ENCODE measurements at regions of chr16 and their contacts with region 1.

Region 1: DNA sequence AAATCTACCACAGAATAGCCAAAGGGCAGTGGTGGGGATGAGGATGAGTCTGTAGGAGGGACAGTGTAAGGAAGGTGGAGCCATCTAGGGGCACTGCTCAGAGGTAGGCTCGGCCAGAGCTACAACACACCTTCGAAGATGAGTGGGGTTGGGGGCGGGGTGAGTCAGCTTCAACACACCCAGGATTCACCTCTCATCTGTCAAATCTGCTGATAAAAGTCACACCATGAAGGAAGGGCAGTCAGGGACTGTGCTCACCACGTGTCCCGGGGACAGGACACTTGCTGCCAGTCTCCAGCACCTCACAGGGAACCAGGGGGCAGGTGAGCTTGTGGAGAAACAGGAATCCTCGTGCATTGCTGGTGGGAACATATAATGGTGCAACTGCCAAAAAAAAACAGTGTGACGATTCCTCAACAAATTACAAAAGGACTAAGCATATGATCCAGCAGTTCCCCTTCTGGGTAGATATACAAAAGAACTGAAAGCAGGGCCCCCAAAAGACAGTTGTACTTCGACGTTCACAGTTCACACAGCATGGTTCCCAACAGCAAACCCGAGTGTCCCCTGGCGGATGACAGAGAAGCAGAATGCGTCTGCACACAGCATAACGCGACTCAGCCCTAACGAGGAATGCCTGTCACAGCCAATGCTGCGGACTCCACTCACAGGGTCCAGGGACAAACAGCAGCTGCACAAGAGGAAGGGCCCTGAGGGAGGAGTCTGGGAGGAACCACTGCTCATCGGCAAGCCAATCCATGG is 133.1 kb downstream of the ANKRD11 start:
- DNase-seq: no peak
- H3K4me3 ChIP-seq: no peak overlapping the region
- H3K27ac ChIP-seq: no peak overlapping the region
- H3K4me1 ChIP-seq: peaks cover 11 to 28% (median 16%) of the 10 kb centered on the region in 4 experiments
- H3K27me3 ChIP-seq: no peaks in the 10 kb centered on the region
- CTCF ChIP-seq: peak; percentile 7 to 55 (median 48); a peak in 2 of 4 replicates
- EP300 ChIP-seq: no peak
- POLR2A ChIP-seq: no peak; a peak in 1 of 3 replicates
- RAD21 ChIP-seq: peak; percentile 44 to 56

Region 2: DNA sequence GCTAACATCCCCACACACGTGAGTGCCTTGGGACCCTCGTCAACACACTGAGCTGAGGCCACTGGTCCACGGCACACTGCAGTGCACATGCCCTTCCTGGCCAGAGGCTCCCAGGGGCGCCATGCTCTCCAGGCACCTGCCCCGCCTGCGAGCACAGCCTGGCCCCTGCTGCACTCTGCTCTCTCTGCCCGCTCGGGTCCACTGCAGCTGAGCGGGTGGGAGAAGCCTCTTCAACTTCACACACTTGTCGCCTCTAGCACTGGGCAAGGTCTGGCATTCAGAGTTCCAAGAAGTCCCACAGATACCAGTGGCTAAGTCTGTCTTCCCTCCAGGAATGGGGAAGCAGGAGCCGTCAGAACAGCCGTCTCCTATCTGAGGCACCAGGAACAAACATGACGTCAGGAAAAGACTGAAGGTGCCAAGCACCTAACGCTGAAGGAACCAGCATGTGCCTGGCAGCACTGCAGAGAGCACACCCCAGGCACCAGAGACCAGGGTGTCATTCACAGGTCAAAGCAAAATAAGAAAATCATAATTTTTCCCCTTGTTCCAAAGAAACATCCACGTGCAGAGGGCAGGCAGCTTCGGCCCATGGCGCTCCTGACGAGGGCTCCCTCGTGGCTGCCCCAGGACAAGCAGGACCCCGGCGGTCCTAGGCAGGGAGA is 56.8 kb before region 1 on chr16:
- CTCF ChIA-PET with region 1: no interaction called
- POLR2A ChIA-PET with region 1: no interaction called
- DNase-seq: no peak
- H3K4me3 ChIP-seq: no peak overlapping the region
- H3K27ac ChIP-seq: no peak overlapping the region
- H3K4me1 ChIP-seq: peaks cover 0 to 22% (median 12%) of the 10 kb centered on the region in 4 experiments; a peak in 6 of 7 replicates
- H3K27me3 ChIP-seq: no peaks in the 10 kb centered on the region
- CTCF ChIP-seq: peak in 2 of 3 experiments; percentile 31 to 37; a peak in 2 of 4 replicates
- EP300 ChIP-seq: no peak
- POLR2A ChIP-seq: no peak
- RAD21 ChIP-seq: no peak

Region 3: DNA sequence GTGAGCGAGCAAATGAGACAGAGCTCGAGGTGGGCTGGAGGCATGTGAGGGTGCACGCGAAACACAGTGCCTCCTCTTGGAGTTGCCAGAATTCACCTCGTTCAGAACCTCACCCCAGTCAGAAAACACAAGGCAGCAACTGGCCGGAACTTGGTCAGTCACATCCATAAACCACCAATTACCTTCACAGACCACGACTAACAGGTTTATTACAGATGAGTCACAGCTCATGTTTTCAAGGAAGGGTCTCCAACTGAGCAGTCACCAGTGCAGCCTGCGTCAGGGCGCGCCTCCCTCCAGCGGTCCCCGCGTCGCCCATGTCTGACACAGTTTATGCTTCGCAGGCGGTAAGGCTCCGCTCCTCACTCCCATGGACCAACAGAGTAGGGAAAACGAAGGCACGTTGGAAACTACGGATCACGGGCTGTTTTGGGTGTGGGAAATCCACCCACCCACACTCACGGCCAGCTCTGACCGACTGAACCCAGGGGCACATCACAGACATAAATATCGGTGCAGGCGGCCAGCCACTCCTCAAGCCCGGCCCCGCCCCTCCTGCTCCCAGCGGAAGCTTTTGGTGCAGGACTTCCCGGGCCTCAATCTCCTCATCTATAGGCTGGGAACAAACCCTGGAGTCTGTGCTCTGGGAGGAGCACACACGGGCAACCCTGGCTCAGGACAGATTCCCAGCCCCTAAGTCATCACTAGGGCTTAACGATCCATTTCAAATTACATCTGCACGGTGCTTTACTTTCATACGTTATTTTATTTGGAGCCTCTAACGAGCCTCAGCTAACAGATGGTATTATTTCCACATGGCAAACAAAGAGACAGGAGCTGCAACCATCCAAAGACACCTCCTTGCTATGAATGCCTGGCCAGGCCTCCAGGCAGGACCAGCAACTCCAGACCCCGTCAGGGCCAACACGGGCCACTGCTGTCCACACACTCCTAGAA is 13.5 kb before region 1 on chr16:
- CTCF ChIA-PET with region 1: interaction called, 20 read pairs
- POLR2A ChIA-PET with region 1: interaction called, 3 read pairs
- DNase-seq: no peak
- H3K4me3 ChIP-seq: no peak overlapping the region
- H3K27ac ChIP-seq: no peak overlapping the region
- H3K4me1 ChIP-seq: peaks cover 5 to 14% (median 11%) of the 10 kb centered on the region in 4 experiments; a peak in 5 of 7 replicates
- H3K27me3 ChIP-seq: no peaks in the 10 kb centered on the region
- CTCF ChIP-seq: no peak
- EP300 ChIP-seq: no peak
- POLR2A ChIP-seq: no peak
- RAD21 ChIP-seq: no peak

Region 4: DNA sequence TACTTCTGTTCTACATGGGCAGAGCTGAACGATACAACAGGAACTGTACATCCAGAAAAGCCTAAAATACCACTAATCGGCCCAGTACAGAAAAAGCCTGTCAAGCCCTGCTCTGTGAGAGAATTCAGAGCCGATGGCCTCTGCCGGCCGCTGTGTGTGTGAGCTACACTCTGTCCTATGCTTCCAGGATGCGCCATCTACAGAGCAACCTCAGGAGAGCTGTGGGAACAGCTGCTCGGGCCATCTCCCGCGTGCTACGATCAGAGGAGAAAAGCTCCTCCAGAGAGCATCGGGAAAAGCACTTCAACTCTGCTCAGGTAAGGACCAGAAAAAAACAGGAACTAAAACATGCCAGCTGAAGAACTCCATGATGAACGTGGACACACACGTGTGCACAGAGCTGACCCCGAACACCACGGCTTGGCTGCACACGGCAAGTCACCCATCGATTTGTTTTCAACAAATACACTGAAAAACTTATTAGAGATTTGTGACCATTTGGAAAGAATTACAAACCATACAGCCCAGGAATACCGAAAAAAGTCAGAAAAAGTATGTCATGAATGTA is 17.2 kb after region 1 on chr16:
- CTCF ChIA-PET with region 1: interaction called, 13 read pairs
- POLR2A ChIA-PET with region 1: interaction called, 7 read pairs
- DNase-seq: no peak
- H3K4me3 ChIP-seq: no peak overlapping the region
- H3K27ac ChIP-seq: no peak overlapping the region
- H3K4me1 ChIP-seq: peaks cover 3 to 16% (median 4%) of the 10 kb centered on the region in 4 experiments; a peak in 5 of 7 replicates
- H3K27me3 ChIP-seq: no peaks in the 10 kb centered on the region
- CTCF ChIP-seq: peak; percentile 22 to 41 (median 37); a peak in 3 of 4 replicates
- EP300 ChIP-seq: no peak
- POLR2A ChIP-seq: no peak
- RAD21 ChIP-seq: peak; percentile 29 to 43; a peak in 3 of 4 replicates

Region 5: GRCh38 chr16:89476804-89477261 is 119.6 kb after region 1 on chr16:
- CTCF ChIA-PET with region 1: no interaction called
- POLR2A ChIA-PET with region 1: no interaction called
- DNase-seq: no peak
- H3K4me3 ChIP-seq: no peak overlapping the region
- H3K27ac ChIP-seq: no peak overlapping the region
- H3K4me1 ChIP-seq: peaks cover 3 to 17% (median 10%) of the 10 kb centered on the region in 4 experiments
- H3K27me3 ChIP-seq: no peaks in the 10 kb centered on the region
- CTCF ChIP-seq: no peak
- EP300 ChIP-seq: no peak
- POLR2A ChIP-seq: no peak
- RAD21 ChIP-seq: no peak

Measured in H1 (cell line).